Posterior cingulate gyrus (tissue), 11 donors: ENCODE measurements at regions of chr12 and their contacts with region 1.

Region 1: DNA sequence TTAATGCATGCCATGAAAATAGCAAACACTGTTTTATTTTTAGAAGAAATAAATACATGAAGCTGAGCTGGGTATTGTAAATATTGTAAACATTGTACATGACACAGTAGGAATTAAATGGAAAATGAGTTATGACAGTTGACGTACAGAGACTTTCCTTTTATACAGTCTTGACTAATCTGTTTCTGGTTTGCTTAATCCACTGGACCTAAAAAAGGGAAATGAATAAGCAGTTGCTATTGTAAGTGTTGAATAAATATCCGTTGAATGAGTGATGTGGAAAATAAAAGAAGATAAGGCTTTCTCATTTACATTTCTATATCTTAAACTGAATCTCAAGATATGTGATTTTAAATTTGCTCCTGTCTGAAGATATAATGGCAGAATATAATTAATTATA is 15.0 kb downstream of the PMCH start:
- DNase-seq: no peak

Region 2: GRCh38 chr12:101021909-101022388 is 1160.7 kb before region 1 on chr12:
- intact Hi-C with region 1: no loop called
- DNase-seq: no peak

Region 3: DNA sequence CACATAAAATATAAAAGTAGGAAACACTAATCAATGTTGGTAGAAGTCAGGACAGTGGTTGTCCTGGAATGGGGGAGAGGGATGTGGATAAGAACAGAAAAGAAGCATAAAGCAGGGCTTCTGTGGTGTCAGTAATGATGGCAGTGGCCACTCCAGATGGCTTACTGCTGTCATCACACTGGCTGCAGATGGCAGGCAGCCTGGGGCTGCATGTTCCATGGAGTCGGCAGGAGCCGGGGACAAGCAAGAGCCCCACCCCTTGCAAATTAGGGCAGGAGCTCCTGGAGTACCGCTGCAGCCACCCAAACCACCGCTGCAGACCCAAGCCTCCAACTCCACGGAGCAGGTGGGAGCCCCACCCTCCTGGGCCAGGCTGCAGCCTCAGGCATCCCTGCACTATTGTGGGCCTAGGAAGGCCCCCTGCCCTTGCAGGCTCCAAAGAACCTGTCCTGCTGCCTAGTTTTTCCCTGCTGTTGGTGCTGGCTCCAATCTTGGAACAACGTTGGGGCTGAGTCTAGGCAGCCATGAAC is 943.8 kb before region 1 on chr12:
- intact Hi-C with region 1: no loop called
- DNase-seq: no peak

Region 4: DNA sequence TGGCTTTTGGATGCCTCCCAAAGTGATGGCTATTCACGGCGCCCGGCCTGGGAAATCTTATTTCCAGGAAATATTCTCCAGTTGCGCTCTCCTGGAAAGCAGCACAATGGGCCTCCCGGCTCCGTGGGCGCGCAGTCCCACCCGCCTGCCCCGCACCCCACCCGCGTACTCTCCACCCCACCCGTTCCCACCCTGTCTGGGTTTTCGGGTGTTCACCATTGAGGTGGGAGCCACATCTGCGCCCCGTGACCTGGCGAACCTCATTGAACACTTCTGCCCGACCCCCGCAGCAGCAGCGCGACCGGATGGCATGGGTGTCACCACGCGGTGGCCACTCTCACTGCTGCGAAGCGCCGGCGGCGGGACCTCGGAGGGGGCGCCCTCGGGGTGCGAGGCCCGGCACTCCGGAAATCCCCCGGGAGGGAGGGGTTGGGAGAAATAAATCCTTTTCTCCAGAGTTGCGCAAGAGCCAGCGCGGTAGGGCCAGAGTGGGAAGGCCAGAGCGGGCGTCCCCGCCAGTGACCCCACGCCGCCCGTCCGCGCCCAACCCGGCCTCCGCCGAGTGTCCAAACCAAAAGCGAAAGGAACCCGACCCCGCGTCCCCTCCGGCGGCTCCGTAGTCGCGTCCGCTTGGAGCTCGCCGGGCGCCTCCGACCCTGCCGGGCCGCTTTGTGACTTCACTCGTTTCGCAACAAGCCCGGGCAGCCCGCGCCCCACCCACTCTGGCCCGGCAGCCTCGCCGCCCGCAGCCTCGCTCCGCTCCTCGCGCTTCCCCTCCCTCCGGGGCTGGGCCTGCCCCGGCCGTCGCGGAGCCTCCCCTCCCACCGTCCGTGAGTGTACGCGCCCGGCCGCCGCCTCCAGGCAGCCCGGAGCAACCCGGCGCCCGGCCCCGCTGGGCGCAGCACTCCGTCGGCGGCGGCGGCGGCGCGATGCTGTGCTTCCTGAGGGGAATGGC is 305.5 kb before region 1 on chr12 and contains the start of gene DRAM1:
- intact Hi-C with region 1: no loop called
- DNase-seq: peak; percentile 38 to 95 (median 64)

Region 5: DNA sequence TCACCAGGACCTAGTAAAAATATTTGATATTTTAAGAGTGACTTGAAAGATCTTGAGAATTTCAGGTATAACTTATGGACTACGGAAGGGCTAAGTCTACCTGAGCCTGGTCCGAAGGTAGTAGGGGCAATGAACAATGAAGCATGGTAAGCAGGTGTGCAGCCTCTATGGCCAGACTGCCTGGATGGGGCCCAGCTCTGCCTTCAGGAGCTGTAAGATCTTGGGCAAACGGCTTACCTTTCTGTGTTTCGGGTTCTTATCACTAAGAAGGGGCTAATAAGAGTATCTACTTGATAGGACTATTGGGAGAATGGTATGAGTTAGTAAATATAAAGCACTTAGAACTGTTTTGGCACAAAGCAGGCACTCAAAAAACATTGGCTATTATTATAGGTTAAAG is 101.8 kb before region 1 on chr12:
- intact Hi-C with region 1: no loop called
- DNase-seq: no peak

Region 6: DNA sequence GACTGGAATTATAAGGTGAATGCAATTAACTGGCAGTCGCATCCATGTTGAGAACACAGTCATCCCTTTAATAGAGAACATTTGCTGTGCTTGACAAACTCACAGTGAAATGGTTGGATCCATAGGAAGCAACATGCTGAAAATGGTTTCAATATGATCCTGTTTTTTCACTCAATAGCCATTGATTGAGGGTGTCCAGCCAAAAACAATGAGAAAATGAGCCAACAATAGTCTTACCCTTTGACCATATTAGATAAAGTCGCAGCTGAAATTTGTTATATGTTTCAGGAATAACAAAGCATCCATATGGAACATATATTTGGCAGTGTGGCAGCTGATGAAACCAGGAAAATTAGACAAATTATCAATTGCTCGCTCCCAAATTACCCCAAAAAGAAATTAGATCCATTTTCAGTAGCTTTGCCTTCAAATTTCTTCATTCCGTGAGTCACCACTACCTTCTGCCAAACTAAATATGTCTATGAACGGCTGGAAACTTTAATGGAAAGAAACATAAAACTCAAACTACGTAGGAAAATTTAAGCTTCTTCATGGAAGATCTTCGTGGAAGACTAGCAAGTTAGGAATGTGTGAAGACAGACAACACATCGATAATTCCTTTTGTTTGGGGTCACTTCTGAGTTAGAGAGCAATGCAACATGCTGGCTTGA is 280.3 kb after region 1 on chr12:
- intact Hi-C with region 1: loop called (anchors 10 kb)
- DNase-seq: no peak